Naive thymus-derived CD8-positive, alpha-beta T cell (primary cell): ENCODE measurements at regions of chr6 and their contacts with region 1.

Region 1: GRCh38 chr6:24933868-24934401 is 1.8 kb downstream of the RIPOR2 start:
- DNase-seq: peak in 8 of 10 donors; percentile 42 to 81 (median 65)
- ATAC-seq: peak; percentile 8 to 27
- H3K4me3 Mint-ChIP-seq: peak overlapping the region; percentile 81 to 99 (median 98)
- H3K27ac Mint-ChIP-seq: peak overlapping the region; percentile 87 to 98 (median 95)
- H3K4me1 Mint-ChIP-seq: peaks cover 29 to 69% (median 54%) of the 10 kb centered on the region in 4 donors
- H3K27me3 Mint-ChIP-seq: no peaks in the 10 kb centered on the region

Region 2: DNA sequence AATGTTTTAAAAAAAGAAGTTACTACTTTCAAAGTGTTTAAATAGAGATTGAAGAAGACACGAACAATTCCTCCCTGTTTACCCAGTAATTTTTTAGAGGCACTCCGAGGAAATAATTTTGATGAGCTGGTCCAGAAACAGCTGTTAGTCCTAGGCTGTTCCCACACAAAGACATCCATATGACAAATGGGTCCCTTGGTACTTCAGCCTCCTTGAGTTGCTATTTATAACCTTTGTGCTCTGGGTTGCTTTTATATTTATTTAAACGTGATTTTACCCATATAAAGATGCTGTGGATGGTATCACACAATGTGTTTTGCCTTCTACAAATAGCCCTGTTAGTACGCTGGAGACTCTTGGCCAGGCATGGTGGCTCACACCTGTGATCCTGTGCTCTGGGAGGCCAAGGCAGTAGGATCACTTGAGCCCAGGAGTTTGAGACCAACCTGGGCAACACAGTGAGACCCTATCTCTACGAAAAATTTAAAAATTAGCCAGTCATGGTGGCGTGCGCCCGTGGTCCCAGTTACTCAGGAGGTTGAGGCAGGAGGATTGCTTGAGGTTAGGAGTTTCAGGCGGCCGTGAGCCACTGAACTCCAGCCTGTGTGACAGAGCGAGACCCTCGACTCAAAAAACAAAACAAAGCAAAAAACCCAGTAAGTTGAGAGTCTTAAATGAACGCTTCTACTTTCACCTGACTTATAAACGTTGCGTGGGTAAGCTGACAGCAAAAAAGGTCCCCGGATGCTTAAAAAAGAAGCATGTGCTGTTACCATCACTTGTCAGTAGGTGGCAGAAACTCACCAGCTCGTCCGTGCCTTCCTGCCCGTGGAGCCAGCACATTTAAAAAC is 78.3 kb before region 1 on chr6:
- POLR2A ChIA-PET with region 1: interaction called, 66 read pairs
- DNase-seq: peak; percentile 38 to 83 (median 72)
- ATAC-seq: peak; percentile 39 to 67
- H3K4me3 Mint-ChIP-seq: peak overlapping the region; percentile 31 to 84 (median 72)
- H3K27ac Mint-ChIP-seq: peak overlapping the region; percentile 88 to 98 (median 94)
- H3K4me1 Mint-ChIP-seq: peaks cover 31 to 58% (median 53%) of the 10 kb centered on the region in 4 donors
- H3K27me3 Mint-ChIP-seq: no peaks in the 10 kb centered on the region

Region 3: DNA sequence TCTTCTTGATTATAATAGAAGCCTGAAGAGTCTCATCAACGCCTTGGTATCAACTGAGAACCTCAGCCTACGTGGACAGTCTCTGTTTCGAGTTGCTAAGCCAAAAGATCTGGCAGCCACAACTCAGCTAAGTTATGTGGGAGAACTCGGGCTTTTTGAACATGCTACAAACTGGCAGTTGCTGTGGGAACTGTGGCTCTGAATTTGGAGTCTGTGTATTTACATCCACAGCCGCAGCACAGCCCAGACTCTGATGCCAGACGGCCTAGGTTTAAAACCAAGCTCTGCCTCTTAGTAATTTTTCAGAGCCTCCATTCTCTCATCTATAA is 34.0 kb before region 1 on chr6:
- POLR2A ChIA-PET with region 1: interaction called, 18 read pairs
- DNase-seq: peak in 7 of 10 donors; percentile 15 to 76 (median 56)
- ATAC-seq: peak; percentile 60 to 87
- H3K4me3 Mint-ChIP-seq: peak overlapping the region; percentile 29 to 76 (median 70)
- H3K27ac Mint-ChIP-seq: peak overlapping the region; percentile 87 to 99 (median 95)
- H3K4me1 Mint-ChIP-seq: peaks cover 49 to 96% (median 92%) of the 10 kb centered on the region in 4 donors
- H3K27me3 Mint-ChIP-seq: no peaks in the 10 kb centered on the region

Region 4: DNA sequence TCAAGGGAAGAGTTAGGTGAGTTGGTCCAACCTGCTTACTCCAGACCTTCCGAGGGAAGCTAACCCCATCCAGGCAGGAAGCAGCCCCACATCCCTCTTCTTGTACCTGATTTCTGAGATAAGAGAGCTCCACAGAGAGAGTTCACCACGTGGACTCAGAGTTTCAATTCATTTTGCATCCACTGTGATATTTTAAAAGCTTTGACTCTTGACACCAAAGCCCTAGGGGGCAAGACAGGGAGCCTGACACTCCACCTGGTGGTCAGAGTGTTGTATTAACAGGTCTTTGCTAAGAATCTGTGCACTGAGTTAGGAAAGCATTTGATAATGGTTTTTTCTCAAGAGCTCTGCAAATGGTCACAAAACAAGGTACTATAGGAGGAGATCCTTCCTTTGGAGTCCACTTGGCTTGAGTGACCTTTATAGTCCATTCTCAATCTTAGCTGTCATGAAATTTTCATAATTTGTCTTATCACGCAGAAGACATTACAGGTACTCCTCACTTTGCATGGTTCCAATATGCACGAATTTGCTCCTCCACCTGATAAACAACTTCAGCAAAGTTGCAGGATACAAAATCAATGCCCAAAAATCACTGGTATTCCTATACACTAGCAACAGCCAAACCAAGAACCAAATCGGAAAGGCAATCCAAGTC is 58.0 kb after region 1 on chr6:
- POLR2A ChIA-PET with region 1: interaction called, 289 read pairs
- DNase-seq: peak; percentile 50 to 90 (median 78)
- ATAC-seq: peak; percentile 86 to 88
- H3K4me3 Mint-ChIP-seq: peak overlapping the region; percentile 36 to 82 (median 70)
- H3K27ac Mint-ChIP-seq: peak overlapping the region; percentile 89 to 96 (median 93)
- H3K4me1 Mint-ChIP-seq: peaks cover 44 to 82% (median 77%) of the 10 kb centered on the region in 4 donors
- H3K27me3 Mint-ChIP-seq: no peaks in the 10 kb centered on the region

Region 5: GRCh38 chr6:25017932-25018567 is 84.1 kb after region 1 on chr6:
- POLR2A ChIA-PET with region 1: interaction called, 39 read pairs
- DNase-seq: peak; percentile 59 to 92 (median 78)
- ATAC-seq: peak; percentile 72 to 74
- H3K4me3 Mint-ChIP-seq: peak overlapping the region in 7 of 10 donors; percentile 23 to 72 (median 46)
- H3K27ac Mint-ChIP-seq: peak overlapping the region; percentile 84 to 96 (median 91)
- H3K4me1 Mint-ChIP-seq: peaks cover 17 to 43% (median 35%) of the 10 kb centered on the region in 4 donors
- H3K27me3 Mint-ChIP-seq: no peaks in the 10 kb centered on the region